ENCODE measurements at regions of chr12 and their contacts with region 1.

Region 1: GRCh38 chr12:117025481-117026151 is 73.6 kb downstream of the TESC start:
- DNase-seq: peak; percentile 72
- ATAC-seq: peak; percentile 86
- H3K4me3 Mint-ChIP-seq: no peak overlapping the region
- H3K27ac Mint-ChIP-seq: peak overlapping the region; percentile 61
- H3K4me1 Mint-ChIP-seq: peaks cover 4% of the 10 kb centered on the region
- H3K27me3 Mint-ChIP-seq: no peaks in the 10 kb centered on the region

Region 2: GRCh38 chr12:117119592-117120198 is 94.1 kb after region 1 on chr12:
- CTCF ChIA-PET with region 1: interaction called, 64 read pairs
- POLR2A ChIA-PET with region 1: no interaction called
- intact Hi-C with region 1: loop called (anchors 1 kb)
- DNase-seq: peak; percentile 47
- ATAC-seq: peak; percentile 78
- H3K4me3 Mint-ChIP-seq: no peak overlapping the region
- H3K27ac Mint-ChIP-seq: no peak overlapping the region
- H3K4me1 Mint-ChIP-seq: peaks cover 6% of the 10 kb centered on the region
- H3K27me3 Mint-ChIP-seq: no peaks in the 10 kb centered on the region